SK-N-SH (cell line): ENCODE measurements at regions of chr7 and their contacts with region 1.

Region 1: DNA sequence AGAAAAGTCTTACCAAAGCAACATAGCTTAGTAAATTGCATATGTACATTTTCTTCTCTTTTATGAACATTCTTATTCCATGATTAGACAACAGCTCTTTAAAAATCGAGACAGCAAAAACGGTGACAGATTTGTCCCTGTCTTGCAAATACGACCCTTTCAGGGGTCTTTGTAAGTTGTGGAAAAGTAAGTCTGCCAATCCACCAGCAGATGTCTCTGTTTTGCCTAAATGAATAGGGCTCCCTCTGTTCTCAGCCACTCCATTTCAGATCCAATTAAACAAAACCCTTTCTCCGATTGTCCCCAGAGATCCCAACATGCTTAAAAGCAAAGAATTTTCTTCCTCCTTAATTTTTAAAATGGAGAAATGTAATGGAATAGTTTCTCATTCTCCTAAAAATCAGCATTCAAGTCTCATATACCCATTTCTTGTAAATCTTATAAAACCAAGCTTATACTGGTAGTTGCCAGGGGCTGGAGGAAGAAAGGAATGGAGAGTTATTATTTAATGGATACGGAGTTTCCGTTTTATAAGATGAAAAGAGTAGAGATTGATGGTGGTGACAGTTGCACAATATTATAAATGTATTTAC is 61.0 kb upstream of the NFE2L3 start:
- DNase-seq: peak; percentile 80
- H3K4me3 ChIP-seq: no peak overlapping the region
- H3K27ac ChIP-seq: no peak overlapping the region
- H3K4me1 ChIP-seq: peaks cover 0 to 2% of the 10 kb centered on the region in 2 experiments; a peak in 2 of 4 replicates
- H3K27me3 ChIP-seq: no peaks in the 10 kb centered on the region
- CTCF ChIP-seq: peak; percentile 97
- EP300 ChIP-seq: no peak
- RAD21 ChIP-seq: peak; percentile 94

Region 2: GRCh38 chr7:25694699-25695098 is 396.3 kb before region 1 on chr7:
- CTCF ChIA-PET with region 1: no interaction called
- POLR2A ChIA-PET with region 1: no interaction called
- DNase-seq: no peak
- H3K4me3 ChIP-seq: no peak overlapping the region
- H3K27ac ChIP-seq: no peak overlapping the region
- H3K4me1 ChIP-seq: no peaks in the 10 kb centered on the region
- H3K27me3 ChIP-seq: no peaks in the 10 kb centered on the region
- CTCF ChIP-seq: no peak
- EP300 ChIP-seq: no peak
- RAD21 ChIP-seq: no peak

Region 3: GRCh38 chr7:26071622-26072456 is 19.2 kb before region 1 on chr7:
- CTCF ChIA-PET with region 1: interaction called, 162 read pairs
- POLR2A ChIA-PET with region 1: no interaction called
- DNase-seq: no peak
- H3K4me3 ChIP-seq: no peak overlapping the region
- H3K27ac ChIP-seq: no peak overlapping the region
- H3K4me1 ChIP-seq: peaks cover 0 to 8% of the 10 kb centered on the region in 2 experiments; a peak in 1 of 4 replicates
- H3K27me3 ChIP-seq: peaks cover 21% of the 10 kb centered on the region; the same call in 1 of the 2 replicates
- CTCF ChIP-seq: no peak
- EP300 ChIP-seq: no peak
- RAD21 ChIP-seq: no peak

Region 4: GRCh38 chr7:26112203-26112740 is 21.2 kb after region 1 on chr7:
- CTCF ChIA-PET with region 1: interaction called, 27 read pairs
- POLR2A ChIA-PET with region 1: no interaction called
- DNase-seq: no peak
- H3K4me3 ChIP-seq: no peak overlapping the region
- H3K27ac ChIP-seq: no peak overlapping the region
- H3K4me1 ChIP-seq: no peaks in the 10 kb centered on the region
- H3K27me3 ChIP-seq: no peaks in the 10 kb centered on the region; the same call in 1 of the 2 replicates
- CTCF ChIP-seq: no peak
- EP300 ChIP-seq: no peak
- RAD21 ChIP-seq: no peak

Region 5: DNA sequence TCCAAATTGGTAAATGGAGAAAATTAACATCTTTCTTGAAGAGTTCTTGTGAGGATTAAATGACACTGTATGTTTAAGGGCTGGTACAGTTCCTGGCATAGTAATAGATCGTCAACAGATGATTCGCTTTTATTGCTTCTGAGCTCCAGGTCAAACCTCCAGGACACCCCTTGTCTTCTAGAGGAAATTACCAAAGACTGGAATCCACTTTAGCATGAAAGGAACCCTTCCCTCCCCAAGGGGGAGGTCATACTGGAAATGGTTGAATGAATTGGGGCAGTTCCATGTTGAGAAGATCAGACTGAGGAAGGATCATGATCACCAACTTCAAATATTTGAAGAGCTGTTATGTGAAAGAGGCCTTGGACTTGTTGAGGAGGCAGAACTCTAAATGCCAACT is 69.9 kb after region 1 on chr7:
- CTCF ChIA-PET with region 1: interaction called, 11 read pairs
- POLR2A ChIA-PET with region 1: no interaction called
- DNase-seq: no peak
- H3K4me3 ChIP-seq: no peak overlapping the region
- H3K27ac ChIP-seq: no peak overlapping the region
- H3K4me1 ChIP-seq: peaks cover under 1 to 34% of the 10 kb centered on the region in 2 experiments; a peak in 3 of 4 replicates
- H3K27me3 ChIP-seq: no peaks in the 10 kb centered on the region
- CTCF ChIP-seq: no peak
- EP300 ChIP-seq: no peak
- RAD21 ChIP-seq: no peak

Region 6: GRCh38 chr7:26318921-26319320 is 227.9 kb after region 1 on chr7:
- CTCF ChIA-PET with region 1: interaction called, 12 read pairs
- POLR2A ChIA-PET with region 1: no interaction called
- DNase-seq: no peak
- H3K4me3 ChIP-seq: no peak overlapping the region
- H3K27ac ChIP-seq: no peak overlapping the region
- H3K4me1 ChIP-seq: no peaks in the 10 kb centered on the region
- H3K27me3 ChIP-seq: no peaks in the 10 kb centered on the region
- CTCF ChIP-seq: 0 out of 2 replicates have a peak, but pooled peaks have one; percentile 10
- EP300 ChIP-seq: no peak
- RAD21 ChIP-seq: no peak